ENCODE measurements at regions of chr18 and their contacts with region 1.

Region 1: GRCh38 chr18:57561728-57562423 is 24.6 kb downstream of the FECH start:
- DNase-seq: no peak
- ATAC-seq: no peak

Region 2: DNA sequence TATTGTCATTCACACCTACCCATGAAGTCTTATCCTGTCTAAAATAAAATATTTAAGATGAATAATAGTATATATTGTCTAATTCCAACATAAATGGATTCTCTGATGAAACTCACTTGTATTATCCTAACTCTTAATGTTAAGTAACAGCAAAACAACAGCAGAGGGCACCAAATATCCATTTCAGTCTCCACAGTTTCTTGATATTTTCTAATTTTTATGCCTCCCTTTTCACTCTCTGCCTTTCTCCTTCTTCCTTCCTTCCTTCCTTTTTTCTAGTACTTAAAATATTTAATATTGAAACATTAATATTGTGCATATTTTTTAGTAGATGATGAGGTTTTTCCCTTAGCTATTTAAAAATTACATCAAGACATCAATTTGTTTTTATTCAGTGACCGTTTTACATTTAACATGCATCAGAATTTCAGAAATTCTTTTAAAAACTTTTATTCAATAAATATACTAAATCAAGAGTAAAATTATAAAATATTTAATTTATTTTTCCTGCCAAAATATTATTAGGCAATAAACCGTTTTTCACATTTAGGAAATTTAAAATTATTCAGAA is 813.1 kb before region 1 on chr18:
- intact Hi-C with region 1: loop called (anchors 2 kb)
- DNase-seq: no peak
- ATAC-seq: no peak

Region 3: DNA sequence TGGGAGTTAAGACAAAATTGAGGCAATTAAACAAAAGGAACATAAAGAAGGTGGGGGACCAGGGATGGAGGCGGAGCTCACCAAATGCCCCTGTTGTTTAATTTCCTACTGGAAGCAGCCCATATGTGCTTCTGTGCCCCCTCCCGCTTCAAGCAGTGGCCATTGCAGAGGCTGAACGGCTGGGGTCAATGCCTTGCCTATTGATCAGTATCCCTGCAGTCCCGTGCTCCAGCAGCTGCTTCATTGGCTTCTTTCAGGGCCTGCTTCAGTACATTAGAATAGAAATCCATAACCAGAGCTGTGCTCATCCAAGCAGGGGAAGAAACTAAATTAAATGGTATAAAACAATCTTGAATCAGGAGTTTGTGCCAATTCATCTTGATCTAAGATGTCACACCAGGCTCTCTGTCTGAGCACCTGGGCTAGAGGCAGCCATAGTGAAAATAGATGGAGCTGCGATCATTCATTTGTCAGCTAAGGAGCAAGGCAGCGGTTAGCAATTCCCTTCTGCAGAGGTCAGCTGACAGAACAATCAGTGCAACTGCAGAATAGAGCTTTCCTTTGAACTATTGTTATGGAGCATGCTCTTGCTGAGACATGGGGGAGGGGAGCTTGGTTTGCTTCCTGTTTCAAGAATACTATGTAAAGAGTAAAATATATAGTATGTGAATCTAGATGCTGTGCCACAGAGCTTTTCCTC is 688.3 kb before region 1 on chr18:
- intact Hi-C with region 1: loop called (anchors 10 kb)
- DNase-seq: no peak
- ATAC-seq: no peak

Region 4: GRCh38 chr18:57376503-57376902 is 185.4 kb before region 1 on chr18:
- intact Hi-C with region 1: no loop called
- DNase-seq: no peak
- ATAC-seq: no peak

Measured in Right ventricle myocardium inferior (tissue), 1 donor.